Activated naive CD4-positive, alpha-beta T cell treated with anti-CD3 and anti-CD28 coated beads for 36 hours (primary cell): ENCODE measurements at regions of chr3 and their contacts with region 1.

Region 1: DNA sequence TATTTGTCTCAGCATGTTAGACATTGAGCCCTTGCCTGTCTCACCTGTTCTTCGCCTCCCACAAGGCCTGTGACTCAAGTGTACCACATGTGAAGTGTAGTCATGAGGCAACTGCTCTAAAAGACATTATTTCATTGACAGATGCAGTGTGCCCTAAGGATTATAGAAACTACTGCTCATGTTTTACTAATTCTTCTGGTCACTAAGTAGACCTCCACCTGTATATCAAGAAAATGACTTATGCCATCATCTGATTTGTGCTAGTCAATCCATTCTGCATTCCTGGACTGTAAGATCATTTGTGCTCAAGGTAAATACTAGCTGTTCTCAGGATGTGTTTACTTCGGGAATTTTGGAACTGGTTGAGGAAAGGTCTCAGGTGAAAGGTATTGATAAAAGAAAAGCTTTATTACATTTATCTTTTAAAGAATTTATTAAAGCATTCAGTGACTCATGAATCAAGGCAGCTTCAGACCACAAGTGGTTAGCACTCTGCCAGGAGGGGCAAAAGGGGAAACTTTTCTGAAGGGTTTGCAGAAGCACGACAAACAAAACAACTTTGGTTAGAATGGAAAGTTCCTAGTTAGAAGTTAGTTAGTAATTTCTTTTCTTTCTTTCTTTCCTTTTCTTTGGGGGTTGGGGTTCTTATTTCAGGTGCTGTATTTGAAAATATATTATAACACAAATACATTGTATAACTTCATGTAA is 465.3 kb upstream of the CBLB start:
- DNase-seq: peak; percentile 80
- H3K4me3 Mint-ChIP-seq: peak overlapping the region; percentile 68
- H3K27ac Mint-ChIP-seq: peak overlapping the region; percentile 95
- H3K4me1 Mint-ChIP-seq: peaks cover 71% of the 10 kb centered on the region
- H3K27me3 Mint-ChIP-seq: no peaks in the 10 kb centered on the region

Region 2: DNA sequence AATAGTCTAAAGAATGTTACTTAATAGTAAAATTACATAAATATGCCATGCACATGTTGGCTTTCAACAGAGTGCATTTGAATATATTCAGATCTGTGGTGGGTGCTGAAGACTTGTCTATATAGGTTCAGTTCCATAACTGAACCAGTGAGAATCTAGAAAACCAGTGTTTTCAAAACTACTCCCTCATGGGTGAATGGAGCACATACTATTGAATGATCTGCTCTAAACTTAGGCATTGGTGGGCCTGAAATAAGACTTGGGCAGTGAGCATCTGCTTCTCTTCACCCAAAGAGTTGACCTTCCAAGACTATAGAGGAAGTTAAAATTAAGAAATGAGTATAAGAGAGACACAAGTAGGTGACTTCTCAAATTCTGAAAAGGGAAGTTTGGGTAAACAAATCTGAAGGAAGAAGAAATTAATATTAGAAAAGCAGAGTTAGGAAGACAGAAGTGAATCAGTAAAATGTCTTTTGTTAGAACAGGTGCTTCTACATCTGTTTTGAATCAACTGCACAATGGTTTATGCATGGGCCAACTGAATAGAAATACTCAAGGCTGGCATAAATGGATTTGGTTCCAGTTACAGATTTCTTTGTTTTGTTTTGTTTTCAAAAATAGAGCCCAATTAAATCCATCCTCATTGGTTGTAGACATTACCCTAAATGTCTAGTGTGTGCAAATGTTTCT is 948.1 kb before region 1 on chr3:
- CTCF ChIA-PET with region 1: no interaction called
- intact Hi-C with region 1: no loop called
- DNase-seq: no peak
- H3K4me3 Mint-ChIP-seq: no peak overlapping the region
- H3K27ac Mint-ChIP-seq: no peak overlapping the region
- H3K4me1 Mint-ChIP-seq: no peaks in the 10 kb centered on the region
- H3K27me3 Mint-ChIP-seq: no peaks in the 10 kb centered on the region

Region 3: GRCh38 chr3:105676621-105677300 is 657.3 kb before region 1 on chr3:
- CTCF ChIA-PET with region 1: no interaction called
- intact Hi-C with region 1: loop called (anchors 1 kb)
- DNase-seq: peak; percentile 77
- H3K4me3 Mint-ChIP-seq: no peak overlapping the region
- H3K27ac Mint-ChIP-seq: peak overlapping the region; percentile 87
- H3K4me1 Mint-ChIP-seq: peaks cover 18% of the 10 kb centered on the region
- H3K27me3 Mint-ChIP-seq: no peaks in the 10 kb centered on the region

Region 4: DNA sequence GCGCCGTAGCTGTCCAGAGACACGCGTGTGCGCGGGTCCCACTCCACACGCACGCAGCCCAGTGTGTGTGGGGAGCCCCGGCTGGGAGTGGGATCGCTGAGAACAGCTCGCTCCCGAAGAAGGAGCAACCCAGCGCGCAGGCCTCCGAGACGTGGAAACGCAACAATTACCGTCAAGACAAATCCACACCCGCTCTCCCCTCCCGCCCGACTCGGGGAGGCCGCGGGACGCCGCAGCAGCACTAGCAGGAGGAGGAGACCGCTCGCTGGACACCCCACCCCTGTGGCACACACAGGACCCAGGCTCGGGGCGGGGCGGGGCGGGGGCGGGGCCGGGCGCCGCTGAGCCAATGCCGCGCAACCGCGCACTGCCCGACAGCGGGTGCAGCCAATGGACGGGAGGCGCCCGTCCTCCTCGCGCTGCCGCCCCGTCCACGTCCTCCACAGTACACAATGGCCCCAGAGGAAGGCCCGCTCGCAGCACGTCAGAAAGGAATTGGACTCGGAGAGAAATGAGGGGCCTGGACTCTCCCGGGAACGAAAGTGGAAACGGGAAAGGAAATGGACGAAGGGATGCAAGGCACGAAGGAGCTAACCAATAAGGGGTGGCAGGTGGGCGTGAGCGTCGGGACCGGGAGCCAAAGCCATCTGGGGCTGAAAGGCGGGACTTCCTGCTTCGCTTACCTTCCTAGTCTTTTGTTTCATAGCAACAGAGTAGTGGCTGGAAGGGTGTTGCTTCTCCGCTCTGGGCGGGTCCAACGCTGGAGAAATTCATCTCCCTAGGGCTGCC is 465.1 kb before region 1 on chr3 and contains the start of gene CBLB:
- CTCF ChIA-PET with region 1: no interaction called
- intact Hi-C with region 1: loop called (anchors 1 kb)
- DNase-seq: peak; percentile 90
- H3K4me3 Mint-ChIP-seq: peak within 1 kb of the TSS; percentile 94
- H3K27ac Mint-ChIP-seq: peak within 1 kb of the TSS; percentile 93
- H3K4me1 Mint-ChIP-seq: peaks cover 29% of the 10 kb centered on the region
- H3K27me3 Mint-ChIP-seq: no peaks in the 10 kb centered on the region
- total RNA-seq, gene CBLB: 72.8 to 78.9 TPM

Region 5: GRCh38 chr3:106183762-106184391 is 150.2 kb before region 1 on chr3:
- CTCF ChIA-PET with region 1: no interaction called
- intact Hi-C with region 1: loop called (anchors 2 kb)
- DNase-seq: no peak
- H3K4me3 Mint-ChIP-seq: no peak overlapping the region
- H3K27ac Mint-ChIP-seq: no peak overlapping the region
- H3K4me1 Mint-ChIP-seq: peaks cover 42% of the 10 kb centered on the region
- H3K27me3 Mint-ChIP-seq: no peaks in the 10 kb centered on the region

Region 6: DNA sequence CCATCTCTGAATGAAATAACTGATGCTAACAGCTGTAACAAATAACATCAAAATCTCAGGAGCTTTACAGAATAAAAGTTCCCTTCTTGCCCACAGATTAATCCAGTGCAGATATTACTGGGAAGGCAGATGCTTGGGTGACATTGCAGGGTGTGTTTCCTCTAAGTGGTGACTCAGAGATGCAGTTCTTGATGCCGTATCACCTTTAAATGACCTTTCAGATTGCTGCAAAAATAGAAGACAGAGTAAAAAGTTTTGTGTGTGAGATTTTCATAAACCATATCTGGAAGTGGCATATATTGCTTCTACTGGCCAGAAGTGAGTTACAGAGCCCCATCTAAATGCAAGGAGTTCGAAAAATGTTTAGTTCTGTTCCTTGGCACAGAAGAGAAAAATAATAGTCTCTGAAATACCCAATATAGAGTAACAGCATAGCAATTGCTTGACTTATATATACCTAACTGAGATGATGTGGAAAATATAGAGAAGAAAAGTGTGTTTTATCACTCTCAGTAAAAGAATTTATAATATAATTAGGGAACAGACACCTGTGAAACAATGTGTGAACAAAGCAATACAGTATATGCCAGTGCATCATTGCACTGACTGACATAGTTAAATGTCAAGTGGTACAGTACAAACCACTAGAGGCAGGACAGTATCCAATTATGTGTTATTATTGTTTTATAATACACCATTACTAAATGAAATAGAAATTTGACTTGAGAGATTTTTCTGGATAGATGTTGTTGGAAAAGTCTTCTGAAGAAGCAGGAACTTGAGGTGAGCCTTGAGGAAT is 34.6 kb before region 1 on chr3:
- CTCF ChIA-PET with region 1: no interaction called
- intact Hi-C with region 1: loop called (anchors 1 kb)
- DNase-seq: peak; percentile 46
- H3K4me3 Mint-ChIP-seq: no peak overlapping the region
- H3K27ac Mint-ChIP-seq: peak overlapping the region; percentile 40
- H3K4me1 Mint-ChIP-seq: peaks cover 54% of the 10 kb centered on the region
- H3K27me3 Mint-ChIP-seq: no peaks in the 10 kb centered on the region

Region 7: DNA sequence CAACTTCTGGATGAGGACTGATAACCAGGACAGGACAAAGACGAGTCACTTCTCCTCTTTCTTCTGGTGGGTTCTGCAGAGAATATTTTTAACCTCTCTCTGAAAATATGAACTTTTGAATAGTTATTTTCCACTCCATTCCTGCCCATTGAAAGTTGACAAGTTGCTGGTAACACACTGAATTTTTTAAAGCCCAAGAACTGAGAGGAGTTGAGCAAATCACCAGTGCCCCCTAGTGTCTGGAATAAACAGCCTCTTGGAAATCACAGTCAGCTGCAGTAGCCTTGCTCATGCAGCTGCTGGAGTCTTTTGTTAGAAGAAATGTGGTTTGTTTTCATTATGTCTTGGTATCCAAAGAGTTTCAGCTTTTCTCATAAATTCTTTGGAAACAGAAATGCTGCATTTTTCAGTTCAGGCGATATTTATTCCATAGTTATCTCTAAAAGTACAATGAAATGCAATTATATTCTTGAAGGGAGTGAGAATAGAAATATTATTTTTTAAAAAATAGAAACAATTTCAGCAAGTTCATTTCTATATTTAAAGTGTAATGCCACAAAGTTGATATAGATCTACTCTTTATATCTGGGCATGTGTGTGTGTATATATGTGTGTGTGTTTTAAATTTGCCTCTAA is 275.7 kb after region 1 on chr3:
- CTCF ChIA-PET with region 1: interaction called, 7 read pairs
- intact Hi-C with region 1: loop called (anchors 2 kb)
- DNase-seq: peak; percentile 82
- H3K4me3 Mint-ChIP-seq: no peak overlapping the region
- H3K27ac Mint-ChIP-seq: no peak overlapping the region
- H3K4me1 Mint-ChIP-seq: peaks cover 21% of the 10 kb centered on the region
- H3K27me3 Mint-ChIP-seq: no peaks in the 10 kb centered on the region